ENCODE measurements at regions of chr10 and their contacts with region 1.

Region 1: DNA sequence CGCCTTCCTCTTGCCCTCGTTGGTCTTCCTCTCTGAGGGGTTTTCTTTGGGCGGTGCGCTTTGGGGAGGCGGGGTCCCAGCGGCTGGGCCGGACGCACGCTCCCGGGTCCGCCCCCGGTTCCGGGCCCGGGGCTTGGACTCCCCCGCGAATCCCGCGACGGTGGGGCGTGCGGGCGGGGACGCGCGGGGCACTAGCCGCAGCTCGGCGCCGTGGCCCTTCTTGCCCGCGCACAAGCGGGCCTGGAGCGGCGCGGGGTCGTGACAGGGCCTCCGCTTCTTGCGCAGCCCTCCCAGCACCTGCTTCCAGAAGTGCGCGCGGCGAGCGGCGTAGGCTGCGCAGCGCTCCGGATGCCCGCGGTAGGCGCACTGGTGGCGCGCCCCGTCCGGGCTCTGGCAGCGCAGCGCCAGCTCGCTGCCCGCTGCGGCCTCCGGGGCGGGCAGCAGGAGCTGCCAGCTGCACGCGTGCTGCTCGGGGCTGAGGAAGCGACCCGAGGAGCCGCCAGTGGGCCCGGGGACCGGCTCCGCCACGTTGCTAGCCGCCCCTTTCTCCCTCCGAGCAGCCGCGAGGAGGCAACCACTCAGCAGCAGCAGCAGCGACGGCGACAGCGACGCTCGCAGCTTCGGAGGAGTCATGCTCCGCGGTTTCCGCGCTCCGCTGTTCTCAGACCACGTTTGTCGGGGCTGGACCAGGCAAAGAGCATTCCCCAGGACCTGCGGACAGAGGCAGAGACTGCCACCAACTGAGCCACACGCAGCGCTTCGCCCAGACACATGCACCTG is 759 bp downstream of the FGFBP3 start:
- DNase-seq: peak; percentile 56 to 89 (median 62)
- ATAC-seq: peak; percentile 85
- H3K4me3 ChIP-seq: peak overlapping the region; percentile 64
- H3K4me3 Mint-ChIP-seq: peak overlapping the region; percentile 89
- H3K27ac ChIP-seq: peak overlapping the region in 1 of 2 donors; percentile 24
- H3K27ac Mint-ChIP-seq: peak overlapping the region; percentile 86
- H3K4me1 ChIP-seq: peaks cover 18% of the 10 kb centered on the region
- H3K4me1 Mint-ChIP-seq: peaks cover 28% of the 10 kb centered on the region
- H3K27me3 ChIP-seq: no peaks in the 10 kb centered on the region
- H3K27me3 Mint-ChIP-seq: peaks cover 7% of the 10 kb centered on the region
- CTCF ChIP-seq: peak; percentile 55

Region 2: DNA sequence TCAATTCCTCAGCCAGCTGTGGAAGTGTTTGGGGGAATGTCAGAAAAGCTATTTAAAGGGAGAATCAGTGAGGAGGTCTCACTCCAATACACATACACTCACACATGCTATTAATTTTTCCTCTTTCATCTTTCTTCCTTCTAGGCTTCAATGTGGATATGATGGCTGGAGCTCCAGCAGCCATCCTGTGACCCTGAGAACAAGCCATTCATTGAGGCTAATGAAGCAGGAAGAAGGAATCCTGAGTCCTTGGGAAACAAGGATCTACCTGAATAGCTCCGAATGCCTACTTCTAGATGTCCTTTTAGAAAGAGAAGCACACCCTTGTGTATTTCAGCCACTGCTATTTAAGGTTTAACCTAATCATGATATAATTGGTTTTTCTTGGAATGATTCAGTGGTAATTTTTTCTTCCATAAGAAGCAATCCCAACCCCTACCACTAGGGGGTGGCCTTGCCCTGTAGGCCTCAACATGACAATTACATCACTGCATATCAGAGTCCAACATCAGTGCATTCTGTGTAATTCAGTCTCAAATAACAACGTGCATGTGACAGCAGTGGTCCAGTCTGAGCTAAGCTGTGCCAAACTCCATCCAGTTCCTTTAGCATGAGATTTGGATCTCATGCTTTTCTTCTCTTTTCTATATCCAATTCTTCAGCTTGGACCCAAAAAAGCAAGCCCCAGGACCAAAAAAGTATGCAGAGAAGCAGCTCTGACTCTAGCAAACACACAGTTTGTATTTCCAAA is 902.4 kb before region 1 on chr10:
- CTCF ChIA-PET with region 1: no interaction called
- POLR2A ChIA-PET with region 1: no interaction called
- intact Hi-C with region 1: loop called in 1 of 2 experiments (anchors 2 kb)
- DNase-seq: peak; percentile 34 to 84 (median 55)
- ATAC-seq: peak; percentile 92
- H3K4me3 ChIP-seq: no peak overlapping the region
- H3K4me3 Mint-ChIP-seq: peak overlapping the region; percentile 47
- H3K27ac ChIP-seq: no peak overlapping the region
- H3K27ac Mint-ChIP-seq: peak overlapping the region; percentile 13
- H3K4me1 ChIP-seq: peaks cover 8% of the 10 kb centered on the region
- H3K4me1 Mint-ChIP-seq: peaks cover 12% of the 10 kb centered on the region
- H3K27me3 ChIP-seq: no peaks in the 10 kb centered on the region
- H3K27me3 Mint-ChIP-seq: no peaks in the 10 kb centered on the region
- CTCF ChIP-seq: peak; percentile 92

Region 3: DNA sequence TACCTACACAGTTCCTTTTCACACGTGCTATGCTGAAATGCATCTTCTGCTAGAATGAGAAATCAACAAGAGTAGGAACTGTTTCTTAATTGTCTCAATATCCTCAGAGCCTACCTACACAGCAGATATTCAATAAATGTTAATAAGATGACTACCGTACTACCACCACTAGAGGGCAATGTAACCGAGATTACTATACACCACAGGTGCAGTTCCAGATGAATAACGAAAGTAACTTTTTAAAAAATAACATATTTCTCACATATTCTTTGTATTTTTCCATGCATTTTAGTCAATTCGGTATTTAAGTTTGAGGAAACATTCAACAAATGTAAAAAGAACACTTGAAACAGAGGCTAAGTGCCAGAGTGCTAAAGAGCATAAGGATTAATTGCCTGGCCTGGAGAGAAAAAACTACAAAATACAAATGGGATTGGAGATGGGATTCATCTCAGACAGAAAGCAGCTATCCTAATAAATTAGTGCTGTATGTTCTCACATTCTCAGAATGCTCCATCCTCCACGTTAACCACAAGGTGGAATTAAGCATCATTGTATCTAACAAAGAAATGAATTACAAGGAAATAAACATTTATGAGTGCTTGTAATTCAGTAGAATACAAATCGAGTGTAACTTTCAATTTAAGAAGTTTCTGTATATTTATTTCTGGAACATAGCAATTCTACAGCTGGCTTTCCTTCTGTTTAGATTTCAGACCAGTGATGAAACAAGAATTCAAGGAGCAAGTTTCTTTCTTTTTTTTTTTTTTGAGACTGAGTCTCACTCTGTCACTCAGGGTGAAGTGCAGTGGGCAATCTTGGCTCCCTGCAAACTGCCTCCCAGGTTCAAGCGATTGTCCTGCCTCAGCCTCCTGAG is 518.7 kb before region 1 on chr10:
- CTCF ChIA-PET with region 1: no interaction called
- POLR2A ChIA-PET with region 1: no interaction called
- intact Hi-C with region 1: loop called in 1 of 2 experiments (anchors 1 kb)
- DNase-seq: peak in 4 of 14 experiments; percentile 31 to 85 (median 80)
- ATAC-seq: peak; percentile 99
- H3K4me3 ChIP-seq: no peak overlapping the region
- H3K4me3 Mint-ChIP-seq: no peak overlapping the region
- H3K27ac ChIP-seq: no peak overlapping the region
- H3K27ac Mint-ChIP-seq: no peak overlapping the region
- H3K4me1 ChIP-seq: no peaks in the 10 kb centered on the region
- H3K4me1 Mint-ChIP-seq: peaks cover 9% of the 10 kb centered on the region
- H3K27me3 ChIP-seq: peaks cover 0 to 10% of the 10 kb centered on the region in 2 experiments
- H3K27me3 Mint-ChIP-seq: peaks cover 28% of the 10 kb centered on the region
- CTCF ChIP-seq: peak; percentile 78

Region 4: GRCh38 chr10:91632671-91633550 is 275.6 kb before region 1 on chr10 and contains the start of gene PPP1R3C:
- CTCF ChIA-PET with region 1: no interaction called
- POLR2A ChIA-PET with region 1: no interaction called
- intact Hi-C with region 1: loop called in 1 of 2 experiments (anchors 10 kb)
- DNase-seq: peak in 12 of 14 experiments; percentile 0 to 56 (median 16)
- ATAC-seq: peak; percentile 46
- H3K4me3 ChIP-seq: peak within 1 kb of the TSS; percentile 33
- H3K4me3 Mint-ChIP-seq: peak within 1 kb of the TSS; percentile 49
- H3K27ac ChIP-seq: no peak within 1 kb of the TSS
- H3K27ac Mint-ChIP-seq: no peak within 1 kb of the TSS
- H3K4me1 ChIP-seq: peaks cover 12% of the 10 kb centered on the region
- H3K4me1 Mint-ChIP-seq: peaks cover 4% of the 10 kb centered on the region
- H3K27me3 ChIP-seq: peaks cover 31 to 48% of the 10 kb centered on the region in 2 experiments
- H3K27me3 Mint-ChIP-seq: peaks cover 78% of the 10 kb centered on the region
- CTCF ChIP-seq: no peak
- total RNA-seq, gene PPP1R3C: not detected

Region 5: GRCh38 chr10:91797874-91798648 is 110.5 kb before region 1 on chr10 and contains the start of gene TNKS2:
- CTCF ChIA-PET with region 1: interaction called, 11 read pairs
- POLR2A ChIA-PET with region 1: interaction called, 35 read pairs
- intact Hi-C with region 1: loop called in 1 of 2 experiments (anchors 2 kb)
- DNase-seq: peak; percentile 83 to 96 (median 91)
- ATAC-seq: peak; percentile 73
- H3K4me3 ChIP-seq: peak within 1 kb of the TSS; percentile 93
- H3K4me3 Mint-ChIP-seq: peak within 1 kb of the TSS; percentile 98
- H3K27ac ChIP-seq: peak within 1 kb of the TSS; percentile 72 to 90
- H3K27ac Mint-ChIP-seq: peak within 1 kb of the TSS; percentile 97
- H3K4me1 ChIP-seq: peaks cover 20% of the 10 kb centered on the region
- H3K4me1 Mint-ChIP-seq: peaks cover 69% of the 10 kb centered on the region
- H3K27me3 ChIP-seq: no peaks in the 10 kb centered on the region
- H3K27me3 Mint-ChIP-seq: no peaks in the 10 kb centered on the region
- CTCF ChIP-seq: no peak
- total RNA-seq, gene TNKS2: 47.8 to 50.4 TPM

Region 6: DNA sequence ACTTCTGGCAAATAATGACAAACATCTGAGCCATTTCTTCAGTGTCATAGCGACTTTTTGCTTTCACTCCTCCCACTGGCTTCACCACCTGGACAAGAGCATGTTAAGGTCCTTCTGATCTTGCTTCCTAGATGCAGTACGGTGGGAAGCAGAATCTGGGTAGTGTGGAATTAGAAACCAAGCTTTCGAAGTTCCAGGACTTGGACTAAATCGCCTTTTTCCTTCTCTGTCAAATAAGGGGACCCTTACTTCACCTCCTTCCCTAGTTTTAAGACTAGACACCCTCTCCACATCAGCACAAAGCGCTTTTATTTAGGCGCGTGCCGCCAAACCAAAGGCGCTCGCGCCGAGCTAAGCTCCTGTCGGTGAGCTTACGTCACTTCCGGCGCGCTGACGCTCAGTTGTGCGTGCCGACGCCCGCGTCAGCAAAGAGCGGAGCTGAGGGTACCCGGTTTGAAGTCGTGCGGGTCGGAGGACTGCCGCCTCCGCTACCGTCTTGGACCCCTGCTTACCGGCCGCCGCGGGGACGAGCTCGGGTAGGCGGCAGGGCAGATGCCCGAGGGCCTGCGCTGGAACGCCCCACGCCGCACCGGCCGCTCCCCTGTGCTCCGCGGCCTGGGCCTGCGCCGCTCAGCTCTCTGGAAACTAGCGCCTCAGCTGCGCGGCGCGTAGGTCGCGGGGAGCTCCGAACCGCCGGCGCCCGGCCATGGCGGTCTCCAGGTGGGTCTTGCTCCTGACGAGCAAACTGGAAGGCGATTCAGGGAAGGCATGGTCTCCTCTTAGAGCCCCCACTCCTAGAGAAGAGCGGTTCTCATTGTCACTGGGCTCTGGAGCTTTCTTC is 15.1 kb after region 1 on chr10 and contains the start of gene BTAF1:
- CTCF ChIA-PET with region 1: interaction called, 24 read pairs
- POLR2A ChIA-PET with region 1: interaction called, 68 read pairs
- intact Hi-C with region 1: loop called in 1 of 2 experiments (anchors 2 kb)
- DNase-seq: peak; percentile 84 to 98 (median 90)
- ATAC-seq: peak; percentile 93
- H3K4me3 ChIP-seq: peak within 1 kb of the TSS; percentile 86
- H3K4me3 Mint-ChIP-seq: peak within 1 kb of the TSS; percentile 98
- H3K27ac ChIP-seq: peak within 1 kb of the TSS; percentile 93 to 97
- H3K27ac Mint-ChIP-seq: peak within 1 kb of the TSS; percentile 98
- H3K4me1 ChIP-seq: peaks cover 20% of the 10 kb centered on the region
- H3K4me1 Mint-ChIP-seq: peaks cover 47% of the 10 kb centered on the region
- H3K27me3 ChIP-seq: peaks cover 4 to 6% of the 10 kb centered on the region in 2 experiments
- H3K27me3 Mint-ChIP-seq: peaks cover under 1% of the 10 kb centered on the region
- CTCF ChIP-seq: no peak
- total RNA-seq, gene BTAF1: 80.8 to 85.8 TPM